K562 (cell line): ENCODE measurements at regions of chr12 and their contacts with region 1.

Region 1: DNA sequence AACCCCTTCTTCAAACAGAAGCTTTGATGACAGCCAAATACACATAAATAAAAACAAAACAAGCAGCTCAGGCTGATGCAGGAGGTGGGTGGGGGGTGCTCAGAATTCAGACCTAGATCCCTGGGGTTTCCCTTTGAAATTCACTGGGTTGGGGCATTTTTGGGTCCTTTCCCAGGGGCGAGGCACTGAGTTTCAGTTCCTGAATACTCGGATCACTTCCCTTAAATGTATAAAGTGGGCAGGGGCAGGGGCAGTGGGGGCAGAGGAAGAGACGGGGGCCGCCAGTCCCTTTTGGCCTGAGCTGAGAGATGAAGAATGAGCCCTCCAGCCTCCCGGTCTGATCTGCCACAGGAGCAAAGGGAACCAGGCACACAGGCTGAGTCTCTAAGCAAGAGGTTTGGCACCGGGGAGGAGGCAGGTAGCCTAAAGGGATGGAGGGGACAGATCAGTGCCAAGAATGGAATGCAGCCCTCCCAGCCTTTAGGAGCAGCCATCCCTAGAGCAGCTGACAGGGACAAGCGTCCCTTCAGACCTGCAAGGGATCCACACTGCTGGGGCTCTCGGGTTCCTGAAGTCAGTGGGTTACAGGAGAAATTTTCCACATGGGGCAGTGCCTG is 20.3 kb downstream of the KDM2B start:
- DNase-seq: no peak
- ATAC-seq: no peak
- H3K4me3 ChIP-seq: no peak overlapping the region
- H3K27ac ChIP-seq: no peak overlapping the region
- H3K4me1 ChIP-seq: peaks cover 0 to 4% of the 10 kb centered on the region in 2 experiments; a peak in 1 of 5 replicates
- H3K27me3 ChIP-seq: no peaks in the 10 kb centered on the region
- CTCF ChIP-seq: no peak
- EP300 ChIP-seq: no peak
- POLR2A ChIP-seq: no peak
- RAD21 ChIP-seq: no peak

Region 2: DNA sequence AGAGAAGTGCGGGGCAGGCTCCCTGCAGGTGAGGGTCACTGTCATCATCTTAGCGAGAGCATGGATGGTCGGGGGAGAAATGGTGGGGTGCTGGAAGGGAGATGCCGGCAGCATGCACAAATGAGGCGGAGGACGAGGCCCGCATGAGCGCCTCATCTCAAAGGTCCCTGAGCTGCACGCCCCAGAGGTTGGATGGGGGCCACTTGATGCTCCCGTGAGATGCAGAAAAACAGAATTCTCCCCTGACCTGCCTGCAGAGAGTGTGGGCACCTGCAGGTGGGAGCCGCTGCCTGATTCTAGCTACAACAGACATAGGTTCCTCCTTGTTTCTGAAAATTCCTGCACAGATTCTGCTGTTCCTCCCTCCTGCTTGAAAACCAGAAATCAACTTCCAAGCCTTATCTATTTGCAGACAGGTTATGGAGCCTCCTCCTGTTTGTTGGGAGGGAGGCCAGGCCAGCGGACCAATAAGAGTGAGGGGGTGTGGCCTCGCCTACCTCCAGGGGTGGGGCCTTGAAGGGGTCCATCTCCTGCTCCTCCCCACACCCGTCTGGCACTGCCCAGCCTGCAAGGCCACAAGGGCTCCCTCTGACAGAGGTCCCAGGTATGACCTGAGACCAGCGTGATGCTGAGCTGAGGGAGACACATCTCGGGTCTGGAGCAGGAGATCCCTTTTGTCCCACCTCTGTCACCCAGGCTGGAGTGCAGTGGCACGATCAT is 46.9 kb before region 1 on chr12:
- CTCF ChIA-PET with region 1: no interaction called
- POLR2A ChIA-PET with region 1: no interaction called
- in situ Hi-C with region 1: no loop called
- intact Hi-C with region 1: no loop called
- DNase-seq: peak; percentile 86 to 99 (median 98)
- ATAC-seq: peak; percentile 100
- H3K4me3 ChIP-seq: no peak overlapping the region
- H3K27ac ChIP-seq: no peak overlapping the region
- H3K4me1 ChIP-seq: peaks cover 15 to 19% of the 10 kb centered on the region in 2 experiments
- H3K27me3 ChIP-seq: no peaks in the 10 kb centered on the region
- CTCF ChIP-seq: no peak
- EP300 ChIP-seq: 0 out of 2 replicates have a peak, but pooled peaks have one; percentile 3
- POLR2A ChIP-seq: no peak
- RAD21 ChIP-seq: no peak

Region 3: DNA sequence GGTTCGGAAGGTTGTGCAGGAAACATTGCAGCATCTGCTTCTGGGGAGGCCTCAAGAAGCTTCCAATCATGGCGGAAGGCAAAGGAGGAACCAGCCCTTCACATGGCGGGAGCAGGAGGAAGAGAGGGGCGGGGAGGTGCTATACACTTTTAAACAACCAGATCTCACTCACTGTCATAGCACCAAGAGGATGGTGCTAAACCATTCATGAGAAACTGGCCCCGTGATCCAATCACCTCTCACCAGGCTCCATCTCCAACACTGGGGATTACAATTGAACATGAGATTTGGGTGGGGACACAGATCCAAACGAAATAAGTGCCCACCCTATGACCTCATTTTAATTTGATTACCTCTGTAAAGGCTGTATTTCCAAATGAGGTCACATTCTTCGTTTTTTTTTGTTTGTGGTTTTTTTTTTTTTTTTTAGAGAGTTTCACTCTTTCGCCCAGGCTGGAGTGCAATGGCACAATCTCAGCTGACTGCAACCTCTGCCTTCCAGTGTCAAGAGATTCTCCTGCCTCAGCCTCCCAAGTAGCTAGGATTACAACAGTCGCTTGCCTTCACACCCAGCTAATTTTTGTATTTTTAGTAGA is 54.5 kb after region 1 on chr12:
- CTCF ChIA-PET with region 1: no interaction called
- POLR2A ChIA-PET with region 1: no interaction called
- in situ Hi-C with region 1: loop called (anchors 5 kb)
- intact Hi-C with region 1: no loop called
- DNase-seq: no peak
- ATAC-seq: no peak
- H3K4me3 ChIP-seq: no peak overlapping the region
- H3K27ac ChIP-seq: no peak overlapping the region
- H3K4me1 ChIP-seq: peaks cover 5 to 6% of the 10 kb centered on the region in 2 experiments; a peak in 4 of 5 replicates
- H3K27me3 ChIP-seq: no peaks in the 10 kb centered on the region
- CTCF ChIP-seq: no peak
- EP300 ChIP-seq: no peak
- POLR2A ChIP-seq: no peak
- RAD21 ChIP-seq: no peak

Region 4: GRCh38 chr12:121649819-121650353 is 89.4 kb after region 1 on chr12:
- CTCF ChIA-PET with region 1: no interaction called
- POLR2A ChIA-PET with region 1: no interaction called
- in situ Hi-C with region 1: no loop called
- intact Hi-C with region 1: no loop called
- DNase-seq: peak; percentile 65 to 88 (median 76)
- ATAC-seq: peak; percentile 89
- H3K4me3 ChIP-seq: no peak overlapping the region
- H3K27ac ChIP-seq: no peak overlapping the region
- H3K4me1 ChIP-seq: peaks cover 15 to 28% of the 10 kb centered on the region in 2 experiments
- H3K27me3 ChIP-seq: no peaks in the 10 kb centered on the region
- CTCF ChIP-seq: no peak
- EP300 ChIP-seq: peak; percentile 95
- POLR2A ChIP-seq: no peak
- RAD21 ChIP-seq: peak in 1 of 2 experiments; percentile 33; a peak in 1 of 4 replicates